Kidney (tissue), 22 donors: ENCODE measurements at regions of chr14 and their contacts with region 1.

Region 1: DNA sequence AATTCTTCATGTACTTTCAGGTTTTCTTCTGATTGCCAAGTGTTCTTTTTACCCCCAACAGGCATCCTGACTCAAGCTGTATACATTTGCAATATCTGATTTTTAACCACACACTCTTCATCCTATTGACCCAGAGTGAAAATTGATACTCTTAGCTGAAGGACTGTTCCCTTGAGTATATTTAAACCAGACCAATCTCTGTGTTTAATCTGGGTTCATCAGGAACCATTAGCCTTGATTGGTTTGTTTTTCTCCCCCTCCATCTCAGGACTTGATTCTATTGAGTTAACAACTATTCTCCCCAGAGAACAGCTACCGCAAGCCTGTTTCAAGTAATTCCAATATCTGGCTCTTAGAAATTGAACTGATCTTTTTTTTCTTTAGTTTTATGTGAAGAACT is 222.3 kb upstream of the NOVA1 start:
- DNase-seq: no peak
- H3K4me3 ChIP-seq: peak overlapping the region in 2 of 3 donors; percentile 32 to 56
- H3K27ac ChIP-seq: no peak overlapping the region
- H3K4me1 ChIP-seq: no peaks in the 10 kb centered on the region
- H3K27me3 ChIP-seq: no peaks in the 10 kb centered on the region
- CTCF ChIP-seq: no peak

Region 2: GRCh38 chr14:26887847-26888246 is 67.7 kb after region 1 on chr14:
- intact Hi-C with region 1: loop called (anchors 10 kb)
- DNase-seq: no peak
- H3K4me3 ChIP-seq: no peak overlapping the region
- H3K27ac ChIP-seq: no peak overlapping the region
- H3K4me1 ChIP-seq: no peaks in the 10 kb centered on the region
- H3K27me3 ChIP-seq: no peaks in the 10 kb centered on the region
- CTCF ChIP-seq: no peak